Upper lobe of right lung (tissue), 1 donor: ENCODE measurements at regions of chr10 and their contacts with region 1.

Region 1: DNA sequence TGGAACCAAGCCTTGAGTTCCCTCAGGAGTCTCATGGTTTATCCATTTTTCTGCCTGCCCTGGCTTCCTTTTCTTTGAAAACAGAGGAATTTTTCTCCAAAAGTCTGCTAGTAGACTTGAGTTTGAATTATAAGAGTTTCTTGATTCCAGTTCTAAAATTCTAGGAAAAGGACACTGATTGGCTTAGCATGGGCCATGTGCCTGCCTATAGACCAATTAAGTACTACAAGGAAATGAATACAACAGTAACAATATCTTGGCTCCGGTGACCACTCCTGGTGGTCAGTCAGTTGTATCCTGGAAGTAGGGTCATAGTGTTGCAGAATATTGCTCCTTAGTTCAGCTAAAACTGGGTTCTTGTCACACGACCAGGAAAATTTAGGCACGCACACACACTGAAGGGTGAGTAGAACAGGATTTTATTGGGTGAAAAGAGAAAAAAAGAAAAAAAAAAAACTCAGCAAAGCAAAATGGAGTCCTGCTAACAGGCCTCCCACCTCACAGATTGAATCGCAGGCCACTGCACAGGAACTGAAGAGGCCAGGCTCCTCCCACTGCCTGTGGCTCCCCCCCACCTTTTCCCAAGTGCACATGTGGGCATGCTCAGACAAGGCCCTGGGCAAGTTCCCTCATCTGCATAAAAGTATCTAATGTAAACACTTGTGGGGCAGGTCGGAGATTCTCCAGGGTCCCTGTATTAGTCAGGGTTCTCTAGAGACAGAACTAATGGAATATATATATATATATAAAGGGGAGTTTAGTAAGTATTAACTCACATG is 155.1 kb downstream of the LYZL1 start:
- DNase-seq: no peak
- ATAC-seq: peak; percentile 42
- H3K4me3 ChIP-seq: no peak overlapping the region
- H3K27ac ChIP-seq: no peak overlapping the region
- H3K4me1 ChIP-seq: no peaks in the 10 kb centered on the region
- H3K27me3 ChIP-seq: no peaks in the 10 kb centered on the region
- CTCF ChIP-seq: no peak

Region 2: DNA sequence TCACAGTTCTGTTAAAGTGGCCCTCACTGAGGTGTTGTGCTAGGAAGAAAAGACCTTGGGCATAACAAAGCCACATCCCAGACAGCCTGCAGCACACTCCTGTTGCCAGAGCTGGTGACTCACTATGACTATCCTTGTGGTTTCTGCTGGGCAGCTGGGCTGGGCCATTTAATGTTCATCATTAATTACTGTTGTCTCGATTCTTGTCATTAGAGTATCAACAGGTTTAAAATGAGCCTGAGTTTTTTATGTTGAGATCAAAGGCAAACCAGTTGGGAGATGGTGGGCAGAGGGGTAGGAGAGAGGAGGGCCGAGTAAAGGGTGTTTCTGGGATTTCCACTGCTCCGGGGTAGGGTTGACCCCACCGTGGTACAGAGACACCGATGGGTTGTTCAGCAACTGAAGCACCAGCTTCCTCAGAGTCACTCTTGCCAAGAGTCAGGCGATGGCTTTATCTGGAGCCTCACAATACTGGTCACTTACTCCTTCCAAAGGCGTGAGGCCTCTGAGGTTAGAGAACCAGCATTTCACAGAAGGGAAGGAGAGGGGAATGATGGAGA is 283.7 kb before region 1 on chr10:
- intact Hi-C with region 1: no loop called
- DNase-seq: no peak
- ATAC-seq: no peak
- H3K4me3 ChIP-seq: no peak overlapping the region
- H3K27ac ChIP-seq: no peak overlapping the region
- H3K4me1 ChIP-seq: no peaks in the 10 kb centered on the region
- H3K27me3 ChIP-seq: no peaks in the 10 kb centered on the region
- CTCF ChIP-seq: no peak

Region 3: GRCh38 chr10:29386342-29386999 is 57.5 kb before region 1 on chr10:
- intact Hi-C with region 1: loop called (anchors 10 kb)
- DNase-seq: no peak
- ATAC-seq: peak; percentile 73
- H3K4me3 ChIP-seq: no peak overlapping the region
- H3K27ac ChIP-seq: no peak overlapping the region
- H3K4me1 ChIP-seq: no peaks in the 10 kb centered on the region
- H3K27me3 ChIP-seq: no peaks in the 10 kb centered on the region
- CTCF ChIP-seq: peak; percentile 79